Gastrocnemius medialis (tissue), 4 donors: ENCODE measurements at regions of chr12 and their contacts with region 1.

Region 1: DNA sequence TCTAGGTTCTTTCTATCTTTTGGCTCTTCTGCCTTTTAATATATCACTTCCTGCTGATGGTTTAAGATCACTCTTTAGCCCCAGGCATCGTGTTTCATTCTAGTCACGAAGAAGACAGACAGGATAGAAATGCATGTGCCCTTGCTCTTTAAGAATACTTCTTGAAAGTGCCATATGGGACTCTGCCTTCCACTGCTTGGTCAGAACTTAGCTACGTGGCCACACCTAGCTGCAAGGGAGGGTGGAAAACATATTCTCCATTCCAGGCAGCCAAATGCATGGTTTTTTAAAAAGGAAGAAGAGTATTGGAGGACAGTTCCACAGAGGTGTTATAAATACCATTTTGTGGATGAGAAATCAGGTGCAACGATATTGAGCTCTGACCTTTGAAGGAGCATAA is 143.3 kb downstream of the KLRB1 start:
- DNase-seq: no peak
- ATAC-seq: no peak
- H3K4me3 ChIP-seq: no peak overlapping the region
- H3K27ac ChIP-seq: no peak overlapping the region
- H3K4me1 ChIP-seq: no peaks in the 10 kb centered on the region
- H3K27me3 ChIP-seq: no peaks in the 10 kb centered on the region
- CTCF ChIP-seq: no peak
- POLR2A ChIP-seq: no peak

Region 2: DNA sequence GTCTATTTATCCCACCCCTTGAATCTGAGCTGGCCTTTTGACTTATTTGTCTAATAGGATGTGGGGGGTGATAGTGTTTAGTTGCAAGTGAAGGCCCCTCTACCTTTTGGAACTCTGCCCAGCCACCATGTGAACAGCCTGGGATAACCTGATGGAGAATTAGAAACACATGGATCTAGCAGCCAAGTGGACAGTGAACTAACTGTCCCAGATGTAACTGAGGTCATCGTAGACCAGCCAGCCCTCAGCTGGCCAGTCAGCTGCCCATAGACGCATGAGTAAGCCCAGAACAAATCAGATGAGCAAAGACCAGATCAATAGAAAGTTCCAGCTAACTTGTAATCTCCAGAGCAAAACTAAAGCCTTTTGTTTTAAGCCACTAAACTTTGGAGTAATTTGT is 124.3 kb after region 1 on chr12:
- in situ Hi-C with region 1: loop called in 1 of 4 experiments (anchors 25 kb)
- intact Hi-C with region 1: no loop called
- DNase-seq: no peak
- ATAC-seq: no peak
- H3K4me3 ChIP-seq: no peak overlapping the region
- H3K27ac ChIP-seq: no peak overlapping the region
- H3K4me1 ChIP-seq: no peaks in the 10 kb centered on the region
- H3K27me3 ChIP-seq: no peaks in the 10 kb centered on the region
- CTCF ChIP-seq: no peak
- POLR2A ChIP-seq: no peak

Region 3: GRCh38 chr12:10153271-10154144 is 689.1 kb after region 1 on chr12:
- in situ Hi-C with region 1: no loop called
- intact Hi-C with region 1: no loop called
- DNase-seq: peak; percentile 40 to 64
- ATAC-seq: peak; percentile 92
- H3K4me3 ChIP-seq: peak overlapping the region; percentile 64 to 98 (median 70)
- H3K27ac ChIP-seq: peak overlapping the region; percentile 77 to 84 (median 81)
- H3K4me1 ChIP-seq: peaks cover 4 to 8% of the 10 kb centered on the region in 2 donors
- H3K27me3 ChIP-seq: no peaks in the 10 kb centered on the region
- CTCF ChIP-seq: peak; percentile 76 to 88 (median 83)
- POLR2A ChIP-seq: peak in 1 of 2 donors; percentile 14